ENCODE measurements at regions of chr1 and their contacts with region 1.

Region 1: GRCh38 chr1:145885738-145886287 is at the start of gene ANKRD35:
- DNase-seq: peak; percentile 70 to 92 (median 84)
- ATAC-seq: peak; percentile 99
- H3K4me3 ChIP-seq: peak within 1 kb of the TSS; percentile 70
- H3K4me3 Mint-ChIP-seq: peak within 1 kb of the TSS; percentile 89
- H3K27ac ChIP-seq: no peak within 1 kb of the TSS
- H3K27ac Mint-ChIP-seq: no peak within 1 kb of the TSS
- H3K4me1 ChIP-seq: peaks cover 17% of the 10 kb centered on the region
- H3K4me1 Mint-ChIP-seq: peaks cover 20% of the 10 kb centered on the region
- H3K27me3 ChIP-seq: peaks cover 14 to 22% of the 10 kb centered on the region in 2 experiments
- H3K27me3 Mint-ChIP-seq: peaks cover 27% of the 10 kb centered on the region
- CTCF ChIP-seq: no peak
- total RNA-seq, gene ANKRD35: 0.11 TPM in 1 of 2 experiments, not detected in the other

Region 2: DNA sequence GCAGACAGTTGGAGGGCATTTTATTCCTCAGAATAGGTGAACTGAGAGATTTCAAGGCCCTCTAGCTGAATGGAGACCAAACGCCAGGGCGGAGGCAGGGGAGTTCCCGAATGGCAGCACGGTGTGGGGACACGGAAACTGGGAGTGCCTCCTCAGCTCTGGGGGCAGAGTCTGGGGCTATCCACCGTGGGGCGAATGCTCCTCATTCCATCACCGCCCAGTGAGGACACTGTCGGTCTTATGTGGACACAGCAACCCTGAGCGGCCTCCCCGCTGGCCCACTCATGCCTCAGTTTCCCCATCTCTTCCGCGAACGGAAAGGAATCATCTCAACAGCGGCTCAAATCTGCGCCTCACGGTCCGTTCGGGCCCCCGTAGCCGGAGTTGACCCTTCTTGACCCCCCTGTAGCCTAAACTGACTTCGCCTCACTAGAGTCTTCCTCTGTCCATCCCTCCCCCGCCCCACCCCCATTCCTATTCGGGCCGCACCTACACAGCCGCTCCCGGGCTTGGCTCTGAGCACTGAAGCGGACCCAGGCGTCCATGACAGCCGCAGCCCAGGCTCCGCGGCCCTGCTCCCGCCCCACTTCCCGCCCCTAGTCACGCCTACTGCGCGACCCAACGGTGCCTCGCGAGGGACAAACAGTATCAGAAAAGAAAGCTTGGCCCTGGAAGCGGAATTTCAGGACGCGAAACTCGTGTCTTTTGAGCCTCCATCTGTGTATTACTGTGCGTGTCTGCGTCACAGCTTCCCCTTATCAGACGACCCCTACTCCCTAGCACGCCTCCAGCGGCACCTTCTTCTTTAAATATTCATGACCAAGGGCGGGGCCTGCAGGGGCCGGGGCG is 32.6 kb after region 1 on chr1 and contains the start of gene PEX11B:
- CTCF ChIA-PET with region 1: interaction called, 3 read pairs
- POLR2A ChIA-PET with region 1: no interaction called
- intact Hi-C with region 1: loop called in 1 of 2 experiments (anchors 2 kb)
- DNase-seq: peak; percentile 87 to 96 (median 92)
- ATAC-seq: peak; percentile 90
- H3K4me3 ChIP-seq: peak within 1 kb of the TSS; percentile 87
- H3K4me3 Mint-ChIP-seq: peak within 1 kb of the TSS; percentile 94
- H3K27ac ChIP-seq: peak within 1 kb of the TSS; percentile 52 to 60
- H3K27ac Mint-ChIP-seq: peak within 1 kb of the TSS; percentile 92
- H3K4me1 ChIP-seq: peaks cover 31% of the 10 kb centered on the region
- H3K4me1 Mint-ChIP-seq: peaks cover 47% of the 10 kb centered on the region
- H3K27me3 ChIP-seq: no peaks in the 10 kb centered on the region
- H3K27me3 Mint-ChIP-seq: no peaks in the 10 kb centered on the region
- CTCF ChIP-seq: no peak
- total RNA-seq, gene PEX11B: 11.6 to 13.2 TPM

Measured in CD4-positive, alpha-beta T cell (primary cell).